ENCODE measurements at regions of chr4 and their contacts with region 1.

Region 1: GRCh38 chr4:89000844-89001360 is 56.1 kb downstream of the FAM13A start:
- DNase-seq: no peak
- ATAC-seq: no peak
- H3K4me3 ChIP-seq: no peak overlapping the region
- H3K4me3 Mint-ChIP-seq: no peak overlapping the region
- H3K27ac ChIP-seq: no peak overlapping the region
- H3K27ac Mint-ChIP-seq: no peak overlapping the region
- H3K4me1 ChIP-seq: no peaks in the 10 kb centered on the region
- H3K4me1 Mint-ChIP-seq: peaks cover 0 to 5% (median 0%) of the 10 kb centered on the region in 3 donors
- H3K27me3 ChIP-seq: no peaks in the 10 kb centered on the region
- H3K27me3 Mint-ChIP-seq: no peaks in the 10 kb centered on the region

Region 2: GRCh38 chr4:89056953-89057398 is 56.1 kb after region 1 on chr4 and contains the start of gene FAM13A:
- CTCF ChIA-PET with region 1: interaction called in 1 of 2 experiments, 11 read pairs
- POLR2A ChIA-PET with region 1: no interaction called
- DNase-seq: peak in 3 of 35 experiments; percentile 1 to 25 (median 6)
- ATAC-seq: no peak
- H3K4me3 ChIP-seq: peak within 1 kb of the TSS in 1 of 2 donors; percentile 10
- H3K4me3 Mint-ChIP-seq: peak within 1 kb of the TSS; percentile 4 to 46 (median 28)
- H3K27ac ChIP-seq: no peak within 1 kb of the TSS
- H3K27ac Mint-ChIP-seq: no peak within 1 kb of the TSS
- H3K4me1 ChIP-seq: no peaks in the 10 kb centered on the region
- H3K4me1 Mint-ChIP-seq: peaks cover 13 to 19% (median 15%) of the 10 kb centered on the region in 3 donors
- H3K27me3 ChIP-seq: no peaks in the 10 kb centered on the region
- H3K27me3 Mint-ChIP-seq: peaks cover 0 to under 1% of the 10 kb centered on the region in 2 donors
- total RNA-seq, gene FAM13A: 11.3 to 92.9 (median 22.7) TPM